Ovary (tissue), 10 donors: ENCODE measurements at regions of chr2 and their contacts with region 1.

Region 1: DNA sequence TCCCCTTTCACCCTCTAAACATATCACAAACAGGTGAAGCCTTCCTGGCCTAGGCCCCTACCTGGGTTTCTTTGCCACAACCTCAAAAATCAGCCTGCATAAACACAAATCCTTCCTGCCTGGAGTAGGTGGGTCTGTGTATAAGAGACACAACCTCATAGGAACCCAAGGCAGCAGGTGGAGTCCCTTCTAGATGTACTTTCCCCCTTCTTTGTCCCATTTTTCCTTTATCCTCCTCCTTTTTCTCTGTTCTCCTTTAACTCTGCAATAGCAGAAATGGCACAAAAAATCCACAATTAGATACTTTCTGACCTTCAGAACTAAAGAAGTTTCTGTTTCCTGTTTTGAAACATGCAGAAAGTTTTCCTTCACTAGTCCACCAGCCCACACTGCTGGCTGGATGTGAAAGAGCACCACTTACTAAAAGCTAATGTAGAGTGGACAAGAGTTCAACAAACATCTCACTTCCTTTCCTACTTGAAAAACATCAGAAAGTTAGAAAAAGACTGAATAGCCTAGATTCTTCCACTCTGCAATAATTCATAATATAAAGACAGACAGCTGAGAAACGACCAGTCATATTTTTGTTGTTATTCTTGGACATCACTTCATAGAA is 11.2 kb downstream of the SLC40A1 start:
- DNase-seq: no peak
- H3K4me3 ChIP-seq: no peak overlapping the region
- H3K27ac ChIP-seq: peak overlapping the region in 1 of 2 donors; percentile 55
- H3K4me1 ChIP-seq: peaks cover 25% of the 10 kb centered on the region
- H3K27me3 ChIP-seq: no peaks in the 10 kb centered on the region
- CTCF ChIP-seq: no peak
- EP300 ChIP-seq: no peak
- POLR2A ChIP-seq: no peak

Region 2: GRCh38 chr2:189506514-189506976 is 62.9 kb before region 1 on chr2:
- intact Hi-C with region 1: loop called in 2 of 4 experiments (anchors 10 kb)
- DNase-seq: no peak
- H3K4me3 ChIP-seq: no peak overlapping the region
- H3K27ac ChIP-seq: no peak overlapping the region
- H3K4me1 ChIP-seq: peaks cover 5% of the 10 kb centered on the region
- H3K27me3 ChIP-seq: no peaks in the 10 kb centered on the region
- CTCF ChIP-seq: no peak
- EP300 ChIP-seq: no peak
- POLR2A ChIP-seq: no peak

Region 3: DNA sequence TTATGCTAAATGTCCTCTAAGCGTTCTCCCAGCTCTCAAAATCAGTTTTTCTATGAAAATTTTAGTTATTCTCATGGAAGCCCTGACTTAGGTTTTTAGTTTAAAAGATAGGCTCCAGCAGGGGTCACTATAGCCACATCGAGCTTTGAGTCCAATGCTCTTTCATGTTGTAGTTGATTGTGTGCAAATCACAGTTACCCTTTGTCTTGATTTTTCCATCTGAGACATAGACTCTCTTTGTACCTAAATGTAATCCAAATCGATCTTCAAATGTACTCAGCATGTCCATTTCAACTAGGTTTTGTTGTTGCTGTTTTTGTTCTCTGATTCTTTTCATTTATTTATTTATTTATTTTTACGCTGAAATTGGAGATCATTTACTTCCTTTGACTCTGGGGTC is 519.5 kb after region 1 on chr2:
- intact Hi-C with region 1: loop called in 1 of 4 experiments (anchors 10 kb)
- DNase-seq: peak in 2 of 5 donors; percentile 15 to 24
- H3K4me3 ChIP-seq: no peak overlapping the region
- H3K27ac ChIP-seq: no peak overlapping the region
- H3K4me1 ChIP-seq: no peaks in the 10 kb centered on the region
- H3K27me3 ChIP-seq: no peaks in the 10 kb centered on the region
- CTCF ChIP-seq: peak in 2 of 3 donors; percentile 45 to 46
- EP300 ChIP-seq: no peak
- POLR2A ChIP-seq: no peak

Region 4: GRCh38 chr2:190648289-190649034 is 1079.1 kb after region 1 on chr2:
- intact Hi-C with region 1: no loop called
- DNase-seq: peak; percentile 89 to 93 (median 92)
- H3K4me3 ChIP-seq: peak overlapping the region; percentile 98
- H3K27ac ChIP-seq: peak overlapping the region; percentile 62 to 75
- H3K4me1 ChIP-seq: no peaks in the 10 kb centered on the region
- H3K27me3 ChIP-seq: no peaks in the 10 kb centered on the region
- CTCF ChIP-seq: no peak
- EP300 ChIP-seq: no peak
- POLR2A ChIP-seq: peak; percentile 44